Activated CD8-positive, alpha-beta memory T cell treated with anti-CD3 and anti-CD28 coated beads, Interleukin-2, amount 10 ng/mL, durations not matched to agents 7 days and 5 days (primary cell): ENCODE measurements at regions of chr12 and their contacts with region 1.

Region 1: GRCh38 chr12:121483949-121484348 is 84.0 kb downstream of the RNF34 start:
- DNase-seq: no peak
- ATAC-seq: no peak
- H3K4me3 Mint-ChIP-seq: no peak overlapping the region
- H3K27ac Mint-ChIP-seq: no peak overlapping the region
- H3K4me1 Mint-ChIP-seq: no peaks in the 10 kb centered on the region
- H3K27me3 Mint-ChIP-seq: no peaks in the 10 kb centered on the region

Region 2: GRCh38 chr12:121423682-121424623 is 60.0 kb before region 1 on chr12:
- CTCF ChIA-PET with region 1: no interaction called
- DNase-seq: no peak
- ATAC-seq: no peak
- H3K4me3 Mint-ChIP-seq: no peak overlapping the region
- H3K27ac Mint-ChIP-seq: no peak overlapping the region
- H3K4me1 Mint-ChIP-seq: peaks cover 6% of the 10 kb centered on the region
- H3K27me3 Mint-ChIP-seq: no peaks in the 10 kb centered on the region

Region 3: GRCh38 chr12:121467794-121468498 is 16.0 kb before region 1 on chr12:
- CTCF ChIA-PET with region 1: interaction called, 16 read pairs
- DNase-seq: no peak
- ATAC-seq: no peak
- H3K4me3 Mint-ChIP-seq: peak overlapping the region; percentile 42
- H3K27ac Mint-ChIP-seq: no peak overlapping the region
- H3K4me1 Mint-ChIP-seq: peaks cover 17% of the 10 kb centered on the region
- H3K27me3 Mint-ChIP-seq: no peaks in the 10 kb centered on the region

Region 4: GRCh38 chr12:121494093-121494787 is 10.3 kb after region 1 on chr12:
- CTCF ChIA-PET with region 1: interaction called, 100 read pairs
- DNase-seq: peak; percentile 68
- ATAC-seq: peak; percentile 51
- H3K4me3 Mint-ChIP-seq: no peak overlapping the region
- H3K27ac Mint-ChIP-seq: no peak overlapping the region
- H3K4me1 Mint-ChIP-seq: peaks cover 32% of the 10 kb centered on the region
- H3K27me3 Mint-ChIP-seq: no peaks in the 10 kb centered on the region